GM12878 (cell line): ENCODE measurements at regions of chr12 and their contacts with region 1.

Region 1: GRCh38 chr12:54993161-54993835 is 8.7 kb upstream of the TESPA1 start:
- DNase-seq: no peak
- ATAC-seq: peak; percentile 76
- H3K4me3 ChIP-seq: no peak overlapping the region
- H3K27ac ChIP-seq: no peak overlapping the region
- H3K4me1 ChIP-seq: peaks cover 25% of the 10 kb centered on the region
- H3K27me3 ChIP-seq: no peaks in the 10 kb centered on the region
- CTCF ChIP-seq: peak; percentile 70 to 82 (median 78)
- EP300 ChIP-seq: no peak
- POLR2A ChIP-seq: no peak
- RAD21 ChIP-seq: peak; percentile 95

Region 2: GRCh38 chr12:54759751-54760150 is 233.5 kb before region 1 on chr12:
- CTCF ChIA-PET with region 1: interaction called, 12 read pairs
- POLR2A ChIA-PET with region 1: no interaction called
- RAD21 ChIA-PET with region 1: interaction called, 10 read pairs
- SMC1A ChIA-PET with region 1: interaction called, 12 read pairs
- in situ Hi-C with region 1: no loop called
- intact Hi-C with region 1: no loop called
- DNase-seq: peak; percentile 7
- ATAC-seq: peak; percentile 86
- H3K4me3 ChIP-seq: no peak overlapping the region
- H3K27ac ChIP-seq: no peak overlapping the region
- H3K4me1 ChIP-seq: no peaks in the 10 kb centered on the region
- H3K27me3 ChIP-seq: no peaks in the 10 kb centered on the region
- CTCF ChIP-seq: peak; percentile 34 to 48 (median 39); a peak in 5 of 6 replicates
- EP300 ChIP-seq: no peak
- POLR2A ChIP-seq: no peak
- RAD21 ChIP-seq: peak; percentile 72

Region 3: DNA sequence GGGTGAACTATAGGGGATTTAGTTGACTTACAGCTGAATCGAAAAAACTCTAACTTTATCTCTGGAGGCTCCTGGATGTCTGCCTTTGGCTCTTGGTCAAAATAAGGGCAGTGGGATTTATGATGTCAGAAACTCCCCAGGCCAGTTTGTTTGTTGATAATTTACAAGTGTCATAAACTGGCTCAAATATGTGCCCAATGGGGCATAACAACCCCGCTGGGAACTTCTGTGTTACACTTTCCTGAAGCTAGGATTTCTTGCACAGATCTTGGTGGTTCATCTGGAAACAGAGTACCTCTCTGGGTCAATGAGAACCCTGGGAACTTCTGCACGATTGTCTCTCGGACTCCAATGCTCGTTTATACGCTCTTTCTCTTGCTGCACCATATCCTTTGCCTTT is 197.7 kb before region 1 on chr12:
- CTCF ChIA-PET with region 1: no interaction called
- POLR2A ChIA-PET with region 1: no interaction called
- RAD21 ChIA-PET with region 1: no interaction called
- SMC1A ChIA-PET with region 1: no interaction called
- in situ Hi-C with region 1: no loop called
- intact Hi-C with region 1: no loop called
- DNase-seq: no peak
- ATAC-seq: no peak
- H3K4me3 ChIP-seq: no peak overlapping the region
- H3K27ac ChIP-seq: no peak overlapping the region
- H3K4me1 ChIP-seq: no peaks in the 10 kb centered on the region
- H3K27me3 ChIP-seq: no peaks in the 10 kb centered on the region
- CTCF ChIP-seq: no peak
- EP300 ChIP-seq: no peak
- POLR2A ChIP-seq: no peak
- RAD21 ChIP-seq: no peak

Region 4: DNA sequence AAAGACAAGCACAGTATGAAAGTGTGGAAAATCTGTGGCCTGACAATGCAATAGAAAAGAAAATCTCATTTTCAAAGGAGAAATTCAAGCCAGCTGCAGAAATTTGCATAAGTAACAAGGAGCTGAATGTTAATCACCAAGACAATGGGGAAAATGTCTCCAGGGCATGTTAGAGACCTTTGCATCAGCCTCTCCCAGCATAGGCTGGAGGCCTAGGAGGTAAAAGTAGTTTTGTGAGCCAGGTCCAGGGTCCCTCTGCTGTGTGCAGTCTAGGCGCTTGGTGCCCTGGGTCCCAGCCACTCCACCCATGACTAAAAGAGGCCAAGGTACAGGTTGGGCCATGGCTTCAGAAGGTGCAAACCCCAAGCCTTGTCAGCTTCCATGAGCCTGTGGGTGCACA is 67.1 kb before region 1 on chr12:
- CTCF ChIA-PET with region 1: no interaction called
- POLR2A ChIA-PET with region 1: no interaction called
- RAD21 ChIA-PET with region 1: no interaction called
- SMC1A ChIA-PET with region 1: no interaction called
- in situ Hi-C with region 1: no loop called
- intact Hi-C with region 1: no loop called
- DNase-seq: no peak
- ATAC-seq: no peak
- H3K4me3 ChIP-seq: no peak overlapping the region
- H3K27ac ChIP-seq: no peak overlapping the region
- H3K4me1 ChIP-seq: no peaks in the 10 kb centered on the region
- H3K27me3 ChIP-seq: no peaks in the 10 kb centered on the region
- CTCF ChIP-seq: no peak
- EP300 ChIP-seq: no peak
- POLR2A ChIP-seq: no peak
- RAD21 ChIP-seq: no peak

Region 5: DNA sequence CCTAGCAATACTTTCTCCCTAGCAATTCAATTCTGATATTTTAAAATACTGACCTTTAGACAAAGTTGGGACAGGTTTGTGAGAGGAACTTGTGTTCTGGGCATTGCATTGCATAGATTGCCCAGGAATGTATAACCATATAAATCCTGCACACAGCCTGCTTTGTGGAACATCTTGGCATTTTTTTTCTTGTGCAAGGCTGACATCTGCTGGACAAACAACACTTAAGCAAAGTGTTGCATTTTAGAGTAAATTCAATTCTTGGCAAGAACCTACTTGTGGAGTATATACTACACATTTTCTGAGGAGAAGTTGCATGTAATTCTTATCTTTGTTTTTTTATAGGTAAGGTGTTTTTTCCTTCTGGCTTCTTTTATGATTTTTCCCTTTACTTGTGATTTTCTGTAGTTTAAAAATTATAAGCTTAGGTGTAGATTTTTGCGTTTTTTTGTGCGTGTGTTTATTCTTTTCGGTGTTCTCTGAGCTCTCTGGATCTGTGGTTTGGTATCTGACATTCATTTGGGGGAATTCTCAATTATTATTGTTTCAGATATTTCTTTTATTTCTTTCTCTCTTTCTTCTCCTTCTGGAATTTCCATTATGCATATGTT is 35.1 kb before region 1 on chr12:
- CTCF ChIA-PET with region 1: interaction called, 70 read pairs
- POLR2A ChIA-PET with region 1: no interaction called
- RAD21 ChIA-PET with region 1: interaction called, 27 read pairs
- SMC1A ChIA-PET with region 1: interaction called, 40 read pairs
- in situ Hi-C with region 1: no loop called
- intact Hi-C with region 1: loop called (anchors 2 kb)
- DNase-seq: peak; percentile 44
- ATAC-seq: peak; percentile 70
- H3K4me3 ChIP-seq: no peak overlapping the region
- H3K27ac ChIP-seq: no peak overlapping the region
- H3K4me1 ChIP-seq: peaks cover 19% of the 10 kb centered on the region
- H3K27me3 ChIP-seq: no peaks in the 10 kb centered on the region
- CTCF ChIP-seq: peak; percentile 47 to 84 (median 60); a peak in 4 of 6 replicates
- EP300 ChIP-seq: no peak
- POLR2A ChIP-seq: no peak
- RAD21 ChIP-seq: peak; percentile 88

Region 6: GRCh38 chr12:55008944-55009585 is 15.8 kb after region 1 on chr12:
- CTCF ChIA-PET with region 1: interaction called, 21 read pairs
- POLR2A ChIA-PET with region 1: no interaction called
- RAD21 ChIA-PET with region 1: interaction called, 3 read pairs
- SMC1A ChIA-PET with region 1: interaction called, 11 read pairs
- in situ Hi-C with region 1: no loop called
- intact Hi-C with region 1: no loop called
- DNase-seq: no peak
- ATAC-seq: no peak
- H3K4me3 ChIP-seq: no peak overlapping the region
- H3K27ac ChIP-seq: no peak overlapping the region
- H3K4me1 ChIP-seq: no peaks in the 10 kb centered on the region
- H3K27me3 ChIP-seq: no peaks in the 10 kb centered on the region
- CTCF ChIP-seq: no peak
- EP300 ChIP-seq: no peak
- POLR2A ChIP-seq: no peak
- RAD21 ChIP-seq: no peak

Region 7: GRCh38 chr12:55073043-55074022 is 80.0 kb after region 1 on chr12:
- CTCF ChIA-PET with region 1: interaction called, 700 read pairs
- POLR2A ChIA-PET with region 1: interaction called, 8 read pairs
- RAD21 ChIA-PET with region 1: interaction called, 205 read pairs
- SMC1A ChIA-PET with region 1: interaction called, 429 read pairs
- in situ Hi-C with region 1: loop called (anchors 5 kb)
- intact Hi-C with region 1: loop called (anchors 1 kb)
- DNase-seq: peak; percentile 20
- ATAC-seq: peak; percentile 88
- H3K4me3 ChIP-seq: no peak overlapping the region
- H3K27ac ChIP-seq: no peak overlapping the region
- H3K4me1 ChIP-seq: no peaks in the 10 kb centered on the region
- H3K27me3 ChIP-seq: no peaks in the 10 kb centered on the region
- CTCF ChIP-seq: peak; percentile 72 to 91 (median 73)
- EP300 ChIP-seq: no peak
- POLR2A ChIP-seq: no peak
- RAD21 ChIP-seq: peak; percentile 97